ENCODE measurements at regions of chr6 and their contacts with region 1.

Region 1: DNA sequence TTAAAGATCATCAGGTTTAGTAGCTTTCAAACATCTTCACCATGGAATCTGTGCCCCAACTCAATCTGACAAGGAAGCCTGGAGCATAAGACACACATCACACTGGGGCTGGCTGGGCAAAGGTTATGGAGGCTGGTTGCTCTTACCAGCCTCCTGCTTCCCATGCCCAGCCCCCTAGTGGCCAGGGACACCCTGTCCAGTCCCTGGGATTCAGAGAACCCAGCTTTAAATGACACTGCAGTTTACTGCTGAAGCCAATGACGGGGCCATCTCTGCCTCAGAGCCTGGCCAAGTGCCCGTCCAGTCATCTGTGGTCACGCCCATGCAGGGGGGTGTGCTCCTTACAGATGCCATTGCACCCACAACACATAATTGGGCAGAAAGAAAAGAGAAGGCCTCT is 272.9 kb downstream of the SMOC2 start:
- DNase-seq: peak; percentile 59
- H3K4me3 ChIP-seq: no peak overlapping the region
- H3K27ac ChIP-seq: no peak overlapping the region
- H3K4me1 ChIP-seq: no peaks in the 10 kb centered on the region; a peak in 1 of 4 replicates
- H3K27me3 ChIP-seq: no peaks in the 10 kb centered on the region
- CTCF ChIP-seq: no peak; the same call in 1 of the 2 replicates
- EP300 ChIP-seq: no peak
- RAD21 ChIP-seq: peak; percentile 3; the same call in 1 of the 2 replicates

Region 2: DNA sequence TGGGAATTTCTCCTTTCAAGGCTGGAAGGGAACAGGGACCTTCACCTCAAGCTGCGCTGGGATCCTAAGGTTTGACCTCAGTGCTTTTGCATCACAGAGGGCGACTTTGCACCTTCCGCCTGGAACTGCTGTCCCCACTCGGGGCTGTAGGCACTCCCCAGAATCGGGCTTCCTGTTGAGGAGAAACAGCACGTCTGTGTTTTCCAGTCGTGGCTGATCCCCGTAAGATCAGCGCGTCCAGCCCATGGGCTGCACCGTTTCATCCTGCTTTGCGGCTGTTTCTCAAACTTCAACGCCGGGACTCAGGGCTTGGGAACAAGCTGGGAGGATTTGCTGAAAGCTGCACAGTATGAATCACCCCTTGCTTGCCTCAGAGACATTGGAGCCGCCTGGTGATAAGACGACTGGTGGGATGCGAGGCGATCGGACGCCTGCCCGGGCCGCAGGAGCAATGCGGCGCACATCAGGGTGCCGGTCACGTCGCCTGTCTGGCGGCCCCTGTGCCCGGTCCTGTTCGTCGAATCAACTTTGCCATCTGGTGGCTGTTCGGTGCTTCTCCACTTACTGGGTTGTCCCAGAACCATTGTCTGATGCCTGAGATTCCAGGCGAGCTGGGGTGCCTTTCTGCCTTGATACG is 581.2 kb before region 1 on chr6:
- CTCF ChIA-PET with region 1: no interaction called
- POLR2A ChIA-PET with region 1: no interaction called
- DNase-seq: peak; percentile 72
- H3K4me3 ChIP-seq: no peak overlapping the region
- H3K27ac ChIP-seq: no peak overlapping the region
- H3K4me1 ChIP-seq: no peaks in the 10 kb centered on the region; a peak in 1 of 4 replicates
- H3K27me3 ChIP-seq: no peaks in the 10 kb centered on the region
- CTCF ChIP-seq: no peak
- EP300 ChIP-seq: no peak
- RAD21 ChIP-seq: peak; percentile 52

Region 3: GRCh38 chr6:168536665-168537539 is 176.9 kb before region 1 on chr6:
- CTCF ChIA-PET with region 1: no interaction called
- POLR2A ChIA-PET with region 1: no interaction called
- DNase-seq: no peak
- H3K4me3 ChIP-seq: no peak overlapping the region
- H3K27ac ChIP-seq: no peak overlapping the region
- H3K4me1 ChIP-seq: no peaks in the 10 kb centered on the region
- H3K27me3 ChIP-seq: no peaks in the 10 kb centered on the region
- CTCF ChIP-seq: no peak
- EP300 ChIP-seq: no peak
- RAD21 ChIP-seq: no peak

Region 4: GRCh38 chr6:168690271-168690670 is 23.6 kb before region 1 on chr6:
- CTCF ChIA-PET with region 1: interaction called, 12 read pairs
- POLR2A ChIA-PET with region 1: no interaction called
- DNase-seq: no peak
- H3K4me3 ChIP-seq: no peak overlapping the region
- H3K27ac ChIP-seq: no peak overlapping the region
- H3K4me1 ChIP-seq: peaks cover 0 to 6% of the 10 kb centered on the region in 2 experiments; a peak in 1 of 4 replicates
- H3K27me3 ChIP-seq: no peaks in the 10 kb centered on the region
- CTCF ChIP-seq: no peak
- EP300 ChIP-seq: no peak
- RAD21 ChIP-seq: no peak

Region 5: GRCh38 chr6:168699631-168700295 is 14.1 kb before region 1 on chr6:
- CTCF ChIA-PET with region 1: interaction called, 50 read pairs
- POLR2A ChIA-PET with region 1: no interaction called
- DNase-seq: peak; percentile 79
- H3K4me3 ChIP-seq: no peak overlapping the region; a peak in 1 of 4 replicates
- H3K27ac ChIP-seq: peak overlapping the region in 1 of 2 experiments; percentile 51; a peak in 2 of 4 replicates
- H3K4me1 ChIP-seq: peaks cover 0 to 40% of the 10 kb centered on the region in 2 experiments; a peak in 1 of 4 replicates
- H3K27me3 ChIP-seq: no peaks in the 10 kb centered on the region
- CTCF ChIP-seq: no peak
- EP300 ChIP-seq: no peak
- RAD21 ChIP-seq: no peak

Region 6: DNA sequence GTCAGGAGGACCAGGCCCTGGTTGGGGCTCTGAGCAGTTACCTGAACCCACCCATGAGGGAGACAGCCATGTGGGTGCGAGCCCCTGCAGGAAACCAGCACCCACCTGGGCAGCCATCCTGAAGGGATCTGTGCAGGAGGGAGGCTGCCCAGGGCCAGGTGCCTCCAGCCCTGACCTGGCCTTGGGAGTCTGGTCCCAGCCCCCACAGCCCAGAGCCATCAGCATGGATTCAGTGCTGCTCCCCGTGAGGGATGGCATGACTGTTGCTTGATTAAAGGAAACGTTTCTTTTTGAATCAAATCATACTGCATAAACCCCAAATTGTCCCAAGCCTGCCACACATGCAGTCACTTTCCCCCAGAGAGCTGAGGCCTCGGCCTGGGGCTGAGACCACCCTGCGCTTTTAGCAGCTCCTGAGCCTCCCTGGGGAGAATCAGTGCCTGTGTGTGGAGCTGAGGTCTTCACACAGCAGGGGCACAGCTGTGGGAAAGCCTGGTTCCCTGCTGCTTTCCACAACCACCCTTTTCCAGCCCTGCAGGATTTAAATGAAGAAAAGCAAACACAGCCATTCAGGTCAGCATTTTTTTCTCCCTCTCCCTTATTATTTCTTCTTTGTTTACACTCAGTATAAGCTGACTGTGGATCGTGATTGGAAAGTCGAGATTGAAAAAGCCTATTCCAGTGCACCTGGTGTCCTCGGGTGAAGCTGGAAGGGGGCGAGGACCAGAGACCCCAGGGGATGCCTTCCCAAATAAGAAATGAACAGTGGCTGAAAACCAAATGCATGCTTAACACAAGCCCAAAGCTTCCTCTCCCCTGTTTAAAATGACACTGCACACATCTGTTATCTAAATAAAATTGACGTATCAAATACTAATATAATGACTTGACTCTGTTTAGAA is 11.1 kb after region 1 on chr6:
- CTCF ChIA-PET with region 1: interaction called, 15 read pairs
- POLR2A ChIA-PET with region 1: no interaction called
- DNase-seq: no peak
- H3K4me3 ChIP-seq: no peak overlapping the region
- H3K27ac ChIP-seq: no peak overlapping the region
- H3K4me1 ChIP-seq: no peaks in the 10 kb centered on the region; a peak in 1 of 4 replicates
- H3K27me3 ChIP-seq: no peaks in the 10 kb centered on the region
- CTCF ChIP-seq: no peak
- EP300 ChIP-seq: no peak
- RAD21 ChIP-seq: no peak